ENCODE measurements at regions of chr4 and their contacts with region 1.

Region 1: GRCh38 chr4:99696801-99697200 is 39.2 kb upstream of the C4orf54 start:
- DNase-seq: no peak
- H3K4me3 Mint-ChIP-seq: no peak overlapping the region
- H3K27ac Mint-ChIP-seq: no peak overlapping the region
- H3K4me1 Mint-ChIP-seq: no peaks in the 10 kb centered on the region
- H3K27me3 Mint-ChIP-seq: no peaks in the 10 kb centered on the region
- CTCF ChIP-seq: no peak

Region 2: GRCh38 chr4:99615170-99615820 is 81.5 kb before region 1 on chr4:
- CTCF ChIA-PET with region 1: no interaction called
- POLR2A ChIA-PET with region 1: no interaction called
- intact Hi-C with region 1: loop called (anchors 10 kb)
- DNase-seq: no peak
- H3K4me3 Mint-ChIP-seq: no peak overlapping the region
- H3K27ac Mint-ChIP-seq: no peak overlapping the region
- H3K4me1 Mint-ChIP-seq: no peaks in the 10 kb centered on the region
- H3K27me3 Mint-ChIP-seq: no peaks in the 10 kb centered on the region
- CTCF ChIP-seq: no peak

Region 3: GRCh38 chr4:99979872-99980271 is 283.1 kb after region 1 on chr4:
- CTCF ChIA-PET with region 1: no interaction called
- POLR2A ChIA-PET with region 1: no interaction called
- intact Hi-C with region 1: no loop called
- DNase-seq: peak; percentile 24
- H3K4me3 Mint-ChIP-seq: no peak overlapping the region
- H3K27ac Mint-ChIP-seq: no peak overlapping the region
- H3K4me1 Mint-ChIP-seq: peaks cover 10% of the 10 kb centered on the region
- H3K27me3 Mint-ChIP-seq: no peaks in the 10 kb centered on the region
- CTCF ChIP-seq: no peak

Measured in MCF 10A (cell line).